ENCODE measurements at regions of chr5 and their contacts with region 1.

Region 1: DNA sequence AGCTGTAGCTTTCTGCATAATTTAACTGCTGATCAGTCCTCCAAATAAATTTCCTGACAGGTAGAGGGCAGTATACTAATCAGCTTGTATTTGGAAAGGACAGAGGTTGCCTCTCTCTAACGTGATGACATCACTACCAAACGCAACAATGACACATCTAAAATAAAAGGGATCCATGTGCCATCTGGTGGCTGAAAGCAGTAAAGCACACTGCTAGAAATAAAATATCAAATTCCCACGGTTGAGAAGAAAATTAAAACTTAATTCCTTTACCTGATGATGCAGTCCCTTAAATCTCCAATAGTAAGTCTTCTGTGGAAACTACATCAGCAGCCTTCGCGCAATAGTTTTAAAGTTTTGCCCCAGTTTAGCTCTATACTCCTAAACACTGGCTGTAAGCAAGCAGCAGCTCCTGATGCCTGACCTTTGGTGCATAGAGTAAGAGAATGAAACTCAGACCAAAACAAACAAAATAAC is 54.5 kb downstream of the DIAPH1 start:
- DNase-seq: no peak
- ATAC-seq: peak; percentile 98
- H3K4me3 Mint-ChIP-seq: no peak overlapping the region
- H3K27ac Mint-ChIP-seq: peak overlapping the region; percentile 80
- H3K4me1 Mint-ChIP-seq: peaks cover 7% of the 10 kb centered on the region
- H3K27me3 Mint-ChIP-seq: no peaks in the 10 kb centered on the region
- CTCF ChIP-seq: peak; percentile 92

Region 2: DNA sequence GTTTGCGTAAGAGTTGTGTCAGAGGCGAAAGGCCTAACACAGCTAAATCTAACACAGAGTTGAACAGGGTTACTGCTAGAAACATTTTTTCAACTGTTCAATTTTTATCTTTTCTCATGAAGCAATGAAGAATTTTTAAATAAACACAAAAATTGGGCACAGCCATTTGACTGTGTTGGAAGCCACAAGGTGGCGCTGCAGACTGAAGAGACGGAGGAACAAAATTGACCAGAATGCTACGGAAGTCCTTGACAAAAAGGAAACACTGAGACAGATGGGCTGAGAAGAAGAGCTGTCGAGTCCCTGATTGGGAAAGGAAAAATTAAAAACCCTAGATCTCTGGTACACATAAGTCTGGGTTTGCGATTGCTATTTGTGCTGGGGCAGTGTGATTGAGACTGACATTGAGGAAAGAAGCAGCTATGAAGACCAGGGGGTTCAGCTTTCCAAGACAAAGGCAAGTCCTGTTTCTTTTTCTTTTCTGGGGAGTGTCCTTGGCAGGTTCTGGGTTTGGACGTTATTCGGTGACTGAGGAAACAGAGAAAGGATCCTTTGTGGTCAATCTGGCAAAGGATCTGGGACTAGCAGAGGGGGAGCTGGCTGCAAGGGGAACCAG is 377.2 kb before region 1 on chr5 and contains the start of gene PCDHB9:
- CTCF ChIA-PET with region 1: interaction called, 11 read pairs
- POLR2A ChIA-PET with region 1: no interaction called
- intact Hi-C with region 1: loop called (anchors 2 kb)
- DNase-seq: no peak
- ATAC-seq: no peak
- H3K4me3 Mint-ChIP-seq: peak within 1 kb of the TSS; percentile 60
- H3K27ac Mint-ChIP-seq: no peak within 1 kb of the TSS
- H3K4me1 Mint-ChIP-seq: peaks cover 4% of the 10 kb centered on the region
- H3K27me3 Mint-ChIP-seq: peaks cover 26% of the 10 kb centered on the region
- CTCF ChIP-seq: no peak
- total RNA-seq, gene PCDHB9: 0.27 and 0.29 TPM in 2 replicates

Region 3: GRCh38 chr5:141320225-141321169 is 243.8 kb before region 1 on chr5 and contains the start of gene TAF7:
- CTCF ChIA-PET with region 1: interaction called, 17 read pairs
- POLR2A ChIA-PET with region 1: interaction called, 20 read pairs
- intact Hi-C with region 1: loop called (anchors 1 kb)
- DNase-seq: peak; percentile 92
- ATAC-seq: peak; percentile 91
- H3K4me3 Mint-ChIP-seq: peak within 1 kb of the TSS; percentile 99
- H3K27ac Mint-ChIP-seq: peak within 1 kb of the TSS; percentile 99
- H3K4me1 Mint-ChIP-seq: peaks cover 29% of the 10 kb centered on the region
- H3K27me3 Mint-ChIP-seq: no peaks in the 10 kb centered on the region
- CTCF ChIP-seq: peak; percentile 49
- total RNA-seq, gene TAF7: 86.7 and 87.3 TPM in 2 replicates

Region 4: GRCh38 chr5:141369994-141370848 is 194.0 kb before region 1 on chr5 and contains the start of gene PCDHGB3:
- CTCF ChIA-PET with region 1: interaction called, 23 read pairs
- POLR2A ChIA-PET with region 1: no interaction called
- intact Hi-C with region 1: loop called (anchors 1 kb)
- DNase-seq: no peak
- ATAC-seq: peak; percentile 64
- H3K4me3 Mint-ChIP-seq: peak within 1 kb of the TSS; percentile 81
- H3K27ac Mint-ChIP-seq: no peak within 1 kb of the TSS
- H3K4me1 Mint-ChIP-seq: peaks cover 7% of the 10 kb centered on the region
- H3K27me3 Mint-ChIP-seq: peaks cover 54% of the 10 kb centered on the region
- CTCF ChIP-seq: no peak
- total RNA-seq, gene PCDHGB3: 2.0 and 2.6 TPM in 2 replicates

Region 5: GRCh38 chr5:141430332-141431113 is 133.7 kb before region 1 on chr5 and contains the start of gene PCDHGA12:
- CTCF ChIA-PET with region 1: interaction called, 52 read pairs
- POLR2A ChIA-PET with region 1: interaction called, 8 read pairs
- intact Hi-C with region 1: no loop called
- DNase-seq: no peak
- ATAC-seq: peak; percentile 86
- H3K4me3 Mint-ChIP-seq: peak within 1 kb of the TSS; percentile 80
- H3K27ac Mint-ChIP-seq: peak within 1 kb of the TSS; percentile 76
- H3K4me1 Mint-ChIP-seq: peaks cover 16% of the 10 kb centered on the region
- H3K27me3 Mint-ChIP-seq: peaks cover 46% of the 10 kb centered on the region
- CTCF ChIP-seq: no peak
- total RNA-seq, gene PCDHGA12: 1.3 and 1.6 TPM in 2 replicates

Region 6: DNA sequence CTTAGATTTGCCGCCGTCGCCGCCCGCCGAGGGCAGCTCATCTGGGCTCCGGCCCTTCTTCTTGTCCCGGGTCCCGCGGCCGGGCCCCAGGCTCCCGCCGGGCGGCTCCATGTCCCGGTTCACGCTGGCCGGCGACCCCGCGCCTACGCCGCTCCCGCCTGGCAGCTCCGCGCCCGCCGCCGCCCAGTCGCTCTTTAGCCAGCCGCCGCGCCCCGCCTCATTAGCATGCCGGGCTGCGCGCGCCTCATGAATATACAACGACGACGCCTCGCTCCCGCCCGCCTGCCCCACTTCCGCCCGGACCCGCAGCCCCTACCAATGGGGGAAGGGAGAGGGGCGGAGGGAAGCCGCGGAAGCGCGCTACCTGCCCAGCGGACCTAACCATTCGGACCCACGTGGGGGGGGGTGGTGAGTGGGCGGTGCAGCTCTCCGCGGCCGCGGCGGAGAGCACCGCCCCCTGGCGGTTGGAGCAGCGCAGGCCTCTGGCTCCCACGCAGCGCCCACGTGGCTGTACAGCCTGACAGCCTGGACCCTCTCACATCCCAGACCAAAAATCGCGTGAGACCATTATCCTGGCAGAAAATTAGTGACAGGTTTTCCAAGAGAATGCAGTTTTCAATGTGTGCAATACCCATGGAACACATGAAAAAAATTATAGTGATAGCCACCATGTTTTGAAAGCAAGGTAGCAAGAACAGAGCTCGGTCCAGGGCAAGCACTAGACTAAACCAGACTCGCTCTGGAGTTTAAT is 54.7 kb after region 1 on chr5 and contains the start of gene DIAPH1:
- CTCF ChIA-PET with region 1: interaction called, 20 read pairs
- POLR2A ChIA-PET with region 1: interaction called, 4 read pairs
- intact Hi-C with region 1: loop called (anchors 2 kb)
- DNase-seq: peak; percentile 95
- ATAC-seq: peak; percentile 89
- H3K4me3 Mint-ChIP-seq: peak within 1 kb of the TSS; percentile 93
- H3K27ac Mint-ChIP-seq: peak within 1 kb of the TSS; percentile 92
- H3K4me1 Mint-ChIP-seq: peaks cover 66% of the 10 kb centered on the region
- H3K27me3 Mint-ChIP-seq: no peaks in the 10 kb centered on the region
- CTCF ChIP-seq: peak; percentile 69
- total RNA-seq, gene DIAPH1: 136 and 138 TPM in 2 replicates

Region 7: DNA sequence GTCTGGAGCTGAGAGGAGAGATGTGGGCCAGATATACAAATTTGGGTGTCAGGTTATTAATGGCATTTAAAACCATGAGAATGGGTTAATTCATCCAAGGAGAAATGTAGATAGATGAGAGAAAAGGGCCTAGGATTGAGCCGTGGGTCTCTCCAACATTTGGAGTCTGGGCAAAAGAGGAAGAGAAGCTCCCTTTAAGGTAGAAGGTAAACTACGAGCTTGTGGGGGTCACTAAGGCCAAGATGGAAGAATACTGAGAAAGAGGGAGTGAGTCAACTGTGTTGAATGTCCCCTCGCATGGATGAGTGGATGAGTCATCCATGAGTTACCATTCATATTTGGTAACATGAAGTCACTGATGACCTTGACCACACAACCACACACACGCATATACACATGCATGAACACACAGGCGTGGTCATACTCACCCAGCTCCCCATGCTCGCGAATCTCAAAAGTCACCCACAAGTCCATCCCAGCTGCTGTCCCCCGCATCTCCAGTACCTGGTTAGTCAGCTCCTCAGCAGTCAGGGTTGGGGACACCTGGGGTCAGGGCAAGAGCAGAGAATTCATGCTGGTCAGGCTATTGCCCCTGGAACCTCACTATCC is 93.8 kb after region 1 on chr5:
- CTCF ChIA-PET with region 1: no interaction called
- POLR2A ChIA-PET with region 1: no interaction called
- intact Hi-C with region 1: no loop called
- DNase-seq: no peak
- ATAC-seq: peak; percentile 25
- H3K4me3 Mint-ChIP-seq: no peak overlapping the region
- H3K27ac Mint-ChIP-seq: no peak overlapping the region
- H3K4me1 Mint-ChIP-seq: no peaks in the 10 kb centered on the region
- H3K27me3 Mint-ChIP-seq: peaks cover 6% of the 10 kb centered on the region
- CTCF ChIP-seq: no peak